ENCODE measurements at regions of chr1 and their contacts with region 1.

Region 1: DNA sequence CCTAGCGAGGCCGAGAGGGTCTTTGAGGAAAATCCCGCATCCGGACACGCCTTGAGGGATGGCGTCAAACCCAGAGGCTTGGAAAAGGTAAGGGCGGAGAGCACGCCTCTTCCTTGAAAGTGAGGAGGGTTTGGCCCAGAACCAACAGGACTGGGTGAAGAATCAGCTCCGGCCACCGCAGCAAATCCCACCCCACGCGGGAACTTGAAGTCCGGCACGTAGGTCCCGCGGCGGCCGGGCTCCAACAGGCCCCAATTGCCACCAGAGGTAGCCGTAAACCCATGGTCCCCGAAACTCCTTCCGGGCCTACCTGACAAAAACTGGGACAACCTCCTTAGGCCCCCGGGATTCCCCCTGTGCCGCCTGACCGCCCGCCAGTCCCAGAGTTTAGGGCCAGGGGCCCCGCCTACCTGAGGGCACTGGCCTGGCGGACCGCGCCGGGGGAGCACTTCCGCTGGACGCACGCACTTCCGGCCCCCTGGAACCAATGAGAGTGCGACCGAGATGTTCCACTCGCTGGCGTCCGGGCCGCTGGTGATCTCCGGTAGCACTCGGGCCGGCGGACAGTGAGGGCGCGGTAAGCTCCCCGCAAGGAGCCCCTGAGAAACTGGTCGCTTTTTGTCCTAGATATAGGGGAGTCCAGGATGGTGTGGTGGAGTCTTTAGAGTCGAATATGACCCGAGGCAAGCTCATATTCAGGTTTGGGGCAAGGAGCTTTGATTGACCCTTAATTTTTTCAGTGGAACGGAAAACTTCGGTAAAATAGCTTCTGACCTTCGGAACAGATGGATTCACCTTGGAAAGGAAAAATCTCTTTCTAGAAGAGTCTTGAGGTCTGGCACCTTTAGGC is at the starts of genes LZIC and NMNAT1:
- DNase-seq: peak; percentile 93 to 94
- H3K4me3 ChIP-seq: peak within 1 kb of the TSS; percentile 63 to 67 (median 63)
- H3K27ac ChIP-seq: peak within 1 kb of the TSS; percentile 75 to 84 (median 80)
- H3K4me1 ChIP-seq: peaks cover 10 to 18% of the 10 kb centered on the region in 2 donors
- H3K27me3 ChIP-seq: no peaks in the 10 kb centered on the region
- CTCF ChIP-seq: peak in 1 of 6 experiments; percentile 4
- POLR2A ChIP-seq: peak in 1 of 2 donors; percentile 92
- total RNA-seq, gene LZIC: 23.0 to 42.7 (median 34.1) TPM
- total RNA-seq, gene NMNAT1: 10.7 to 18.4 (median 14.7) TPM

Region 2: DNA sequence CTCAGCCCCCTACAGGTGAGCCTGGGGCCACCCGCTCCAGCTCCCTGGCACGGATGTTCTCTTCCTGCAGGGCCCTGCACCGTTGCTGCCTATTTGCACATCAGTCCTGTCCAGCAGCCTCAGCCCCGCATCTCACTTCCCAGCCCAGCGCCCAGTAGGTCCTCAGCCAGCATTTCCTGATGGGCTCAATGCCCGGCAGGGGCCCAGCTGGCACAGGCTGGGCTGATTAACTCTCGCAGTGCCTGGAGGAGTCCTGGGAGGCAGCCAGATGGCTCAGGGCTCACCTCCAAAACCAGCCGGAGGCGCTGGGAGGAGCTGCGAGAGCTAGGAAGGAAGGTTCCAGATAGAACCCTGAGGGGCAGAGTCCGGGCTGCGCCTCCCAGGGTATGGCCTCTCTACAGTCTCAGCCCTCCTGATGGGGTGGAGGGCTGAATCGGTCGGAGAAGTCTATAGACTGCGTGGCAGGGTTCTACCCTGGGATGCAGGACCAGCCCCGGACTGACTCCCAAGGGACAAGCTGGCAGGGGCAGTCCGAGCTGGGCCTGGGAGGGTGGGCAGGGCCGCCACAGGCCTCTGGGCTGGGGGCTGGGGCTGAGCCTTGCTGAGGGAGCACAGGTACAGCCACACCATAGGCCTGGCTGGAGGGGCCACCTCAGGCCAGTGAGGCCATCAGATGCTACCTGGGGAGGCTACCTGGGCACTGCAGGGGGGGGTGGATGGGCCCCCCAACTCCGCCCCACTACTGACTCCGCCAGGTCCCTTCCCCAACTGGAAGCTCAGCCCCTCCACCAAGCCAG is 100.2 kb before region 1 on chr1:
- intact Hi-C with region 1: no loop called
- DNase-seq: no peak
- H3K4me3 ChIP-seq: no peak overlapping the region
- H3K27ac ChIP-seq: no peak overlapping the region
- H3K4me1 ChIP-seq: peaks cover 0 to 16% of the 10 kb centered on the region in 2 donors
- H3K27me3 ChIP-seq: no peaks in the 10 kb centered on the region
- CTCF ChIP-seq: no peak
- POLR2A ChIP-seq: no peak

Region 3: DNA sequence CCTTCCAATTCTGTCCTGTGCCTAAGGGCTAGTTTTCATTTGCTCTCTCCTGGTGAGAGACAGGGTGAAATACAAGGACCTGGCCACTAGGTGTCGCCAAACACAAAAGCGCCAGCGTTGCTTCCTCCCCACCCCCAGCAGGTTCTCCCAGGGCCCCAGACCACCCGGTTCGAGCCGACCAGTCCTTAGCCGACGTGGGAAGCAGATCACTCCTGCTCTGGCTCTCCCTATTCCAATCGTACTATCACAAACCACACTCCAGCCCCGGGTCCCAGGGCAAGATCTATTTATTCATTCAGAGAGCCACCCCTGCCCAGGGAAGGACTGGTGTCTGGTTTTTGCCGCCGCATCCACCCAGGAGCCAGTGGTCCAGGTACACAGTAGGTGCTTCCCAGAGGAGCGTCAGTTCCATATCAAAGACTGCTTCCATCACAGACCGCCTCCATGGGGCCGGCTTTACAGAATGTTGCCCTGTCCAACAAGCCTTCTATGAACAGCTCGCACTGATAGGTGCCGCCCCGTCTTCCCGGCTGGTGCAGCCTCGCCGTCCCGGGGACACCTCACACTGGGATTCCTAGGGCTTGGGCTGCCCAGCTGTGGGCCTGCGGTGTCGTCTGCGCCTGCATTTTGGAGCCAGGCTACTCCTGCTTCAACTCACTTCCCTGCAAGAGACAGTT is 68.1 kb before region 1 on chr1:
- intact Hi-C with region 1: loop called (anchors 2 kb)
- DNase-seq: peak; percentile 70 to 79
- H3K4me3 ChIP-seq: no peak overlapping the region
- H3K27ac ChIP-seq: no peak overlapping the region
- H3K4me1 ChIP-seq: peaks cover 0 to 7% of the 10 kb centered on the region in 2 donors
- H3K27me3 ChIP-seq: no peaks in the 10 kb centered on the region
- CTCF ChIP-seq: peak; percentile 81 to 95 (median 92)
- POLR2A ChIP-seq: no peak

Region 4: GRCh38 chr1:10032590-10033358 is 89.6 kb after region 1 on chr1 and contains the start of gene UBE4B:
- intact Hi-C with region 1: loop called (anchors 5 kb)
- DNase-seq: peak; percentile 98
- H3K4me3 ChIP-seq: peak within 1 kb of the TSS; percentile 42 to 99 (median 97)
- H3K27ac ChIP-seq: peak within 1 kb of the TSS; percentile 93 to 99 (median 97)
- H3K4me1 ChIP-seq: peaks cover 14 to 17% of the 10 kb centered on the region in 2 donors
- H3K27me3 ChIP-seq: no peaks in the 10 kb centered on the region
- CTCF ChIP-seq: peak; percentile 37 to 95 (median 74)
- POLR2A ChIP-seq: peak in 1 of 2 donors; percentile 66
- total RNA-seq, gene UBE4B: 64.0 to 89.0 (median 71.0) TPM

Region 5: GRCh38 chr1:11031624-11032262 is 1088.6 kb after region 1 on chr1:
- intact Hi-C with region 1: no loop called
- DNase-seq: no peak
- H3K4me3 ChIP-seq: no peak overlapping the region
- H3K27ac ChIP-seq: no peak overlapping the region
- H3K4me1 ChIP-seq: no peaks in the 10 kb centered on the region
- H3K27me3 ChIP-seq: no peaks in the 10 kb centered on the region
- CTCF ChIP-seq: no peak
- POLR2A ChIP-seq: no peak

Measured in thyroid gland (tissue), 4 donors.